ENCODE measurements at regions of chr5 and their contacts with region 1.

Region 1: GRCh38 chr5:114803353-114803752 is 366.4 kb downstream of the TRIM36 start:
- DNase-seq: no peak
- H3K4me3 ChIP-seq: no peak overlapping the region
- H3K4me3 Mint-ChIP-seq: no peak overlapping the region
- H3K27ac Mint-ChIP-seq: no peak overlapping the region
- H3K4me1 ChIP-seq: no peaks in the 10 kb centered on the region
- H3K4me1 Mint-ChIP-seq: no peaks in the 10 kb centered on the region
- H3K27me3 ChIP-seq: no peaks in the 10 kb centered on the region
- H3K27me3 Mint-ChIP-seq: peaks cover 5% of the 10 kb centered on the region
- CTCF ChIP-seq: peak in 1 of 2 experiments; percentile 6

Region 2: GRCh38 chr5:115069087-115069968 is 266.0 kb after region 1 on chr5:
- CTCF ChIA-PET with region 1: no interaction called
- POLR2A ChIA-PET with region 1: no interaction called
- intact Hi-C with region 1: loop called (anchors 1 kb)
- DNase-seq: peak; percentile 47 to 49
- H3K4me3 ChIP-seq: no peak overlapping the region
- H3K4me3 Mint-ChIP-seq: peak overlapping the region; percentile 63
- H3K27ac Mint-ChIP-seq: no peak overlapping the region
- H3K4me1 ChIP-seq: no peaks in the 10 kb centered on the region
- H3K4me1 Mint-ChIP-seq: no peaks in the 10 kb centered on the region
- H3K27me3 ChIP-seq: no peaks in the 10 kb centered on the region
- H3K27me3 Mint-ChIP-seq: peaks cover 4% of the 10 kb centered on the region
- CTCF ChIP-seq: peak; percentile 66 to 81

Region 3: DNA sequence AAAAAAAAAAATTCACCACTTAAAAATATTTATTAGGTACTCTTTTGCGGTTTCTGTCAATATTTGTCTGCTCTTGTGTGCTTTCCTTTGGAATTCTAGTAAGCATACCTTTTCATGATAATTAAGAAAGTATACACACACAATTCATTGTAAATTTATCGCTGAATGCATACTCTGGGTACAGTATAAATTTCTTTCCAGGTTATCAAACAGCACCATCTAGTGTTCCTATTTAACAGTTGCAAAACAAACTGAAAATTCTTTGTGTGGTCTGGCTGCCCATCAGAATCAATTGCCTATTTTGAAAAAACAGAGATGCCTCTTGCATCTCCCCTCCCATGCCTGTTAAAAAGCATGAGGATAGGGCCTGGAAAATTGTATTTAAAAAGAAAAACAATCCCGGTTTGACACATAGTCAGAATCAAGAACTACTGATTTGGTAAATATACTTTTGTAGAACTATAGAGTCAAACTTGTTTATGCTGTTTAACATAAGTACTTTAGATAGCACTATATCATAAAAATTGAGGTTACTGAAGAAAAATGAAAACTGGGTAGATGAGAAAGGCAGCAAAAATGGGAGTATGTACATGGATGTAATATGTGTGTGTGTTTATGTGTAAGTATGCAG is 443.1 kb after region 1 on chr5:
- CTCF ChIA-PET with region 1: no interaction called
- POLR2A ChIA-PET with region 1: no interaction called
- intact Hi-C with region 1: loop called (anchors 10 kb)
- DNase-seq: peak in 1 of 2 experiments; percentile 15
- H3K4me3 ChIP-seq: no peak overlapping the region
- H3K4me3 Mint-ChIP-seq: no peak overlapping the region
- H3K27ac Mint-ChIP-seq: no peak overlapping the region
- H3K4me1 ChIP-seq: no peaks in the 10 kb centered on the region
- H3K4me1 Mint-ChIP-seq: peaks cover 6% of the 10 kb centered on the region
- H3K27me3 ChIP-seq: no peaks in the 10 kb centered on the region
- H3K27me3 Mint-ChIP-seq: no peaks in the 10 kb centered on the region
- CTCF ChIP-seq: peak; percentile 66 to 69

Measured in Caco-2 (cell line).